ENCODE measurements at regions of chr5 and their contacts with region 1.

Region 1: GRCh38 chr5:80481019-80481893 is 6.6 kb upstream of the FAM151B start:
- DNase-seq: peak; percentile 67
- H3K4me3 Mint-ChIP-seq: no peak overlapping the region
- H3K27ac Mint-ChIP-seq: no peak overlapping the region
- H3K4me1 Mint-ChIP-seq: peaks cover 12% of the 10 kb centered on the region
- H3K27me3 Mint-ChIP-seq: no peaks in the 10 kb centered on the region

Region 2: GRCh38 chr5:80466669-80467485 is 14.4 kb before region 1 on chr5:
- CTCF ChIA-PET with region 1: interaction called, 11 read pairs
- POLR2A ChIA-PET with region 1: no interaction called
- DNase-seq: no peak
- H3K4me3 Mint-ChIP-seq: no peak overlapping the region
- H3K27ac Mint-ChIP-seq: no peak overlapping the region
- H3K4me1 Mint-ChIP-seq: no peaks in the 10 kb centered on the region
- H3K27me3 Mint-ChIP-seq: no peaks in the 10 kb centered on the region